B cell (primary cell): ENCODE measurements at regions of chr7 and their contacts with region 1.

Region 1: GRCh38 chr7:22726345-22727185 is 435 bp upstream of the IL6 start:
- DNase-seq: peak; percentile 84
- ATAC-seq: peak; percentile 73
- H3K4me3 ChIP-seq: peak overlapping the region in 4 of 5 experiments; percentile 58 to 70 (median 66)
- H3K4me3 Mint-ChIP-seq: peak overlapping the region; percentile 80
- H3K27ac ChIP-seq: peak overlapping the region; percentile 90 to 94
- H3K27ac Mint-ChIP-seq: peak overlapping the region; percentile 90
- H3K4me1 ChIP-seq: peaks cover 77 to 79% of the 10 kb centered on the region in 2 donors
- H3K4me1 Mint-ChIP-seq: peaks cover 80% of the 10 kb centered on the region
- H3K27me3 ChIP-seq: no peaks in the 10 kb centered on the region
- H3K27me3 Mint-ChIP-seq: no peaks in the 10 kb centered on the region
- CTCF ChIP-seq: peak; percentile 78

Region 2: GRCh38 chr7:22577396-22578001 is 149.1 kb before region 1 on chr7:
- CTCF ChIA-PET with region 1: interaction called, 34 read pairs
- POLR2A ChIA-PET with region 1: interaction called, 3 read pairs
- intact Hi-C with region 1: no loop called
- DNase-seq: no peak
- ATAC-seq: peak; percentile 33
- H3K4me3 ChIP-seq: no peak overlapping the region
- H3K4me3 Mint-ChIP-seq: peak overlapping the region; percentile 66
- H3K27ac ChIP-seq: no peak overlapping the region
- H3K27ac Mint-ChIP-seq: peak overlapping the region; percentile 51
- H3K4me1 ChIP-seq: peaks cover 16% of the 10 kb centered on the region in 2 donors
- H3K4me1 Mint-ChIP-seq: peaks cover 29% of the 10 kb centered on the region
- H3K27me3 ChIP-seq: no peaks in the 10 kb centered on the region
- H3K27me3 Mint-ChIP-seq: no peaks in the 10 kb centered on the region
- CTCF ChIP-seq: no peak

Region 3: GRCh38 chr7:22640269-22640668 is 86.3 kb before region 1 on chr7:
- CTCF ChIA-PET with region 1: interaction called, 13 read pairs
- POLR2A ChIA-PET with region 1: no interaction called
- intact Hi-C with region 1: no loop called
- DNase-seq: peak; percentile 43
- ATAC-seq: peak; percentile 66
- H3K4me3 ChIP-seq: peak overlapping the region in 1 of 5 experiments; percentile 4
- H3K4me3 Mint-ChIP-seq: peak overlapping the region; percentile 72
- H3K27ac ChIP-seq: no peak overlapping the region
- H3K27ac Mint-ChIP-seq: peak overlapping the region; percentile 1
- H3K4me1 ChIP-seq: no peaks in the 10 kb centered on the region
- H3K4me1 Mint-ChIP-seq: peaks cover 16% of the 10 kb centered on the region
- H3K27me3 ChIP-seq: no peaks in the 10 kb centered on the region
- H3K27me3 Mint-ChIP-seq: no peaks in the 10 kb centered on the region
- CTCF ChIP-seq: no peak

Region 4: DNA sequence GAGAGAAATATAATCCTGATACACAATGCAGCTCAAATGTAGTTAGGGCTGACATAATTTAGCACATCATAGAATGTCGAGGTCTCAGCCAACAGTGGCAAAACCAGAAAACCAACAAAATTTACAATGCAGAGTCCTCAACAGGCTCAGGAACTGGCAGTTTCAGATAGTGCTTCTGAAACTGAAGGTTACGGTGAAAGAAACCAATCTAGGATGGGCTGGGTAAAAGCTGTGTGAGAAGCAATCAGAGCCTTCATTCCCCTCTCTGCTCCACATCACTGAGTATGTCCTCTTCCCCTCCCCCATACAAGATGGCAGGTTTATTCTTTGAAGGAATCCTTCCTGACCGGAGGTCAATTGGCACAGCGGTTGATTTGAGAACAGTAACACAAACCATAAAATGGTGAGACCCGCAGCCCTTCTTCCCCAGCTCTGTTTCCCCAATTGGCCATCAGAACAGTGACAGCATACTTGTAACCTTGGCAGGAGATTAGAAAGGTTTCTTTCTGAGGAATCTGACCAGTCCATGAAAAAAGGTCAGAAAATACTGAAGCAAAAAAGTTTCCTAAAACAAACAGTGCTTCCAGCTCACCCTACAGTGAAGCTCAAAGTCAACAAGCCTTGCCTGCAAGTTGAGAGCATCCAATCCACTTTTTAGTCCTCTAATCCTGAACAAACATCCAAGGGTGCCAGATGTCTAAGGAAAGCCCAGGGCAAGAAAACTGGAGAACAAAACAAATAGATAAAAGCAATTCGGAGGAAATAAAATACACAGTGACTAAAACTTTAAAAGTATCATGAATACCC is 53.5 kb before region 1 on chr7:
- CTCF ChIA-PET with region 1: interaction called, 24 read pairs
- POLR2A ChIA-PET with region 1: interaction called, 3 read pairs
- intact Hi-C with region 1: no loop called
- DNase-seq: peak; percentile 54
- ATAC-seq: peak; percentile 50
- H3K4me3 ChIP-seq: peak overlapping the region in 1 of 5 experiments; percentile 9
- H3K4me3 Mint-ChIP-seq: peak overlapping the region; percentile 72
- H3K27ac ChIP-seq: peak overlapping the region; percentile 69 to 81
- H3K27ac Mint-ChIP-seq: peak overlapping the region; percentile 91
- H3K4me1 ChIP-seq: peaks cover 76 to 80% of the 10 kb centered on the region in 2 donors
- H3K4me1 Mint-ChIP-seq: peaks cover 78% of the 10 kb centered on the region
- H3K27me3 ChIP-seq: no peaks in the 10 kb centered on the region
- H3K27me3 Mint-ChIP-seq: no peaks in the 10 kb centered on the region
- CTCF ChIP-seq: no peak

Region 5: GRCh38 chr7:22712999-22713398 is 13.6 kb before region 1 on chr7:
- CTCF ChIA-PET with region 1: interaction called, 117 read pairs
- POLR2A ChIA-PET with region 1: interaction called, 3 read pairs
- intact Hi-C with region 1: loop called (anchors 1 kb)
- DNase-seq: peak; percentile 79
- ATAC-seq: peak; percentile 84
- H3K4me3 ChIP-seq: peak overlapping the region in 1 of 5 experiments; percentile 3
- H3K4me3 Mint-ChIP-seq: peak overlapping the region; percentile 75
- H3K27ac ChIP-seq: peak overlapping the region; percentile 96 to 97
- H3K27ac Mint-ChIP-seq: peak overlapping the region; percentile 93
- H3K4me1 ChIP-seq: peaks cover 43 to 51% of the 10 kb centered on the region in 2 donors
- H3K4me1 Mint-ChIP-seq: peaks cover 61% of the 10 kb centered on the region
- H3K27me3 ChIP-seq: no peaks in the 10 kb centered on the region
- H3K27me3 Mint-ChIP-seq: no peaks in the 10 kb centered on the region
- CTCF ChIP-seq: no peak

Region 6: DNA sequence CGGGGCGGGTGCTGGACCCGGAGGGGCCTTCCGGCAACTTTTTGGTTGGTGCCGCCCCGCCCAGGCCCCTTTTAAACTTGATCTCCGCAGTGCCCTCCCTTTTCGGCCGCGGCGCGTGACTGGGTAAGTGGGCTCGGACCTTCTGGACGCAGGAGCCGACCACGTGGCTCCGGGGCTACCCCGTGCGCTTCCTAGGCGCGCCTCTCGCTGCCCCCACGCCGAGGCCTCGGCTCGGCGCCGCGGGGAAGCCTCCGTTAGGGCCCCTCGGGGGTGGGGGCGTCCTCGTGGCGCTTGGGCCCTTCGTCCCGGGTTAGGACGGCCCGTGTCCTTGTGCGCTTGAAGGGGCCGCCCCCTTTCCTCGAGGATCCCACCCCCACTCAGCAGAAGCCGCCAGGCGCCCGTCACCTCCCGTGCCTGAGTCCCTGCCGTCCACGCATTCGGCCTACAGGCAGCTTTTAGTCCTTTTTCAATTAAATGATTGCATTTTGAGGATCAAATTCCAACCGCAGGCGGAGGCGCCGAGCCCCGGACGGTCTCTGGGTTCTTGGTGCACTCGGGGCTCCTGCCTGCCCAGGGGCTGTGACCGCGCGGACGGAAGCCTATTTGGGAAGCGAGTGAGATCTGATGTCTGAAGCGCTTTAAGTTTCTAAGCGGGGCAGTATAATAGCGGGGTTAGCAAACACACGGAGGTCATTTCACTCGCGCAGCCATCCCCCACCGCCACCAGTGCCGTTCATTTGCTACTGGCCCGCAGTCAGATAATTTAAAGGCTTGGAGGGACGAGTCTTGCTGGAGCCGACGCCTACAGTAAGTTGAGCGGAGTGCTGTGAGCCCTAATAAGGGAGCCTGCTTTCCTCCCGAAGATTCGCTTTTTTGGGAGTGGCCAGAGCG is 127.8 kb after region 1 on chr7:
- CTCF ChIA-PET with region 1: no interaction called
- POLR2A ChIA-PET with region 1: no interaction called
- intact Hi-C with region 1: loop called (anchors 5 kb)
- DNase-seq: peak; percentile 88
- ATAC-seq: peak; percentile 83
- H3K4me3 ChIP-seq: peak overlapping the region; percentile 74 to 87 (median 80)
- H3K4me3 Mint-ChIP-seq: peak overlapping the region; percentile 97
- H3K27ac ChIP-seq: peak overlapping the region; percentile 71 to 87
- H3K27ac Mint-ChIP-seq: peak overlapping the region; percentile 94
- H3K4me1 ChIP-seq: peaks cover 17 to 27% of the 10 kb centered on the region in 2 donors
- H3K4me1 Mint-ChIP-seq: peaks cover 38% of the 10 kb centered on the region
- H3K27me3 ChIP-seq: no peaks in the 10 kb centered on the region
- H3K27me3 Mint-ChIP-seq: no peaks in the 10 kb centered on the region
- CTCF ChIP-seq: peak; percentile 84